Dorsolateral prefrontal cortex (tissue), 120 donors: ENCODE measurements at regions of chr2 and their contacts with region 1.

Region 1: GRCh38 chr2:225002039-225002655 is 40.1 kb downstream of the DOCK10 start:
- DNase-seq: peak in 1 of 10 donors; percentile 61
- H3K4me3 ChIP-seq: no peak overlapping the region
- H3K27ac ChIP-seq: peak overlapping the region in 42 of 59 donors; percentile 2 to 82 (median 56)
- H3K27me3 ChIP-seq: peaks cover 0 to 2% (median 0%) of the 10 kb centered on the region in 45 donors
- CTCF ChIP-seq: peak; percentile 47 to 87 (median 80)

Region 2: DNA sequence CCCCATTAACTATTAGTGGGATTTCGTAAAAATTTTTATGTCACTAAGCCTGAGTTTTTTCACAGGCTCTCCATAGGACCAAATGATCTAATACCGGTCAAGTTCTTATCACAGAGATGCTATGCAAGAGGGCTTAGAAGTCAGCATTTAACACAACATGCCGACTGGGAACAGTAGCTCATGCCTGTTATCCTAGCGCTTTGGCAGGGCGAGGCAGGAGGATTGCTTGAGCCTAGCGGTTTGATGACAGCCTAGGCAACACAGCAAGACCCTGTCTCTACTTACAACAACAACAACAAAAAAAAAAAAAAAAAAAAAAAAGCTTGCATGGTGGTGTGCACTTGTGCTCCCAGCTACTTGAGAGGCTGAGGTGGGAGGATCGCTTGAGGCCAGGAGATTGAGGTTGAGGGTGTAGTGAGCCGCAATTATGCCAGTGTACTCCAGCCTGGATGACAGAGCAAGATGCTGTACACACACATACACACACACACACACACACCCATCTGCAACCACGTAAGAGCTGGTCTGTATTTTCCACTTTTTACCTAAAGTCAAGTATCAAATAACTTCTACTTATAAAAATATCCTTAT is 532.7 kb before region 1 on chr2:
- intact Hi-C with region 1: no loop called
- DNase-seq: no peak
- H3K4me3 ChIP-seq: no peak overlapping the region
- H3K27ac ChIP-seq: no peak overlapping the region
- H3K27me3 ChIP-seq: no peaks in the 10 kb centered on the region
- CTCF ChIP-seq: no peak

Region 3: GRCh38 chr2:224802407-224802806 is 199.7 kb before region 1 on chr2:
- intact Hi-C with region 1: loop called in 1 of 2 experiments (anchors 10 kb)
- DNase-seq: no peak
- H3K4me3 ChIP-seq: no peak overlapping the region
- H3K27ac ChIP-seq: peak overlapping the region in 7 of 59 donors; percentile 4 to 39 (median 8)
- H3K27me3 ChIP-seq: no peaks in the 10 kb centered on the region
- CTCF ChIP-seq: no peak